Caco-2 (cell line): ENCODE measurements at regions of chr1 and their contacts with region 1.

Region 1: GRCh38 chr1:80882552-80882951 is 918.2 kb upstream of the ADGRL2 start:
- DNase-seq: peak; percentile 33 to 38
- H3K4me3 ChIP-seq: no peak overlapping the region
- H3K4me3 Mint-ChIP-seq: peak overlapping the region; percentile 40
- H3K27ac Mint-ChIP-seq: no peak overlapping the region
- H3K4me1 ChIP-seq: peaks cover 17% of the 10 kb centered on the region
- H3K4me1 Mint-ChIP-seq: peaks cover 5% of the 10 kb centered on the region
- H3K27me3 ChIP-seq: no peaks in the 10 kb centered on the region
- H3K27me3 Mint-ChIP-seq: no peaks in the 10 kb centered on the region
- CTCF ChIP-seq: no peak

Region 2: DNA sequence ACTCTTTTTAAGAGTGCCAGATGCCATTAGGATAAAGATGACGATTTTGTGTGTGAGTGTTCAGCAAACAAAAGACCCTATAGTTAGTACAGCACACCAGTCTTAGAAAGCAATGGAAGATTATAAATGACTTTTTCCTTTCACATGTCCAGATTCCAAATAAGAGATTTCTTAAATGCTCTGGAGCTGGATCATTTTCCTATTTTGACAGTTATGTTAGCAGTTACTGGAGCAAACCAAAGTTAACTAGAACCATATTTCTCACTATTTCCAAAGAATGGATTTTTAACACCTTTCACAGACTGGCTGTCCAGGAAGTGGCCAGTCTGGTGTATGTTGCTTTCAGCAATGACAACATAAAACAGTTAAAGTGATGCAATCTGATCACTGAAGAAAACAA is 12.4 kb after region 1 on chr1:
- CTCF ChIA-PET with region 1: no interaction called
- POLR2A ChIA-PET with region 1: no interaction called
- intact Hi-C with region 1: loop called (anchors 1 kb)
- DNase-seq: no peak
- H3K4me3 ChIP-seq: no peak overlapping the region
- H3K4me3 Mint-ChIP-seq: no peak overlapping the region
- H3K27ac Mint-ChIP-seq: no peak overlapping the region
- H3K4me1 ChIP-seq: no peaks in the 10 kb centered on the region
- H3K4me1 Mint-ChIP-seq: peaks cover 6% of the 10 kb centered on the region
- H3K27me3 ChIP-seq: no peaks in the 10 kb centered on the region
- H3K27me3 Mint-ChIP-seq: no peaks in the 10 kb centered on the region
- CTCF ChIP-seq: no peak

Region 3: DNA sequence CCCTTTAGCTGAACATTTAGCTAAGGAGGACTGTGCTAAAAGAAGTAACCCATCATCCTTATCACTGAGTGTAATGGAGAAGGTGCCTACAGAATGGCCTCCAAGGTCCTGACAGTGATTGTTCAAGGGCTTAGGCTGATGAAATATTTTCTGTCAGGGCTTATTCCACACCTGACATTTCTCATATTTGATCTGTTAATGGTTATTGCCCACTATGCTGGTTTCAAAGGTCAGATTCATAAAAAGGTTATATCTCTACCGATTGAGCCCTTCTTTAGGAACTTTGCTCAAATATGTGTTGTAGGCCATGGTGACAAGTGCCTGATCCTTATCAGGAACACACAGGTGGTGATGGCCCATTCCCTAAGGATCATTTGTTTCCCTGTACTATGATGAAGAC is 151.7 kb after region 1 on chr1:
- CTCF ChIA-PET with region 1: no interaction called
- POLR2A ChIA-PET with region 1: no interaction called
- intact Hi-C with region 1: loop called (anchors 2 kb)
- DNase-seq: peak; percentile 47 to 60
- H3K4me3 ChIP-seq: no peak overlapping the region
- H3K4me3 Mint-ChIP-seq: no peak overlapping the region
- H3K27ac Mint-ChIP-seq: no peak overlapping the region
- H3K4me1 ChIP-seq: no peaks in the 10 kb centered on the region; the same call in 1 of the 2 replicates
- H3K4me1 Mint-ChIP-seq: no peaks in the 10 kb centered on the region
- H3K27me3 ChIP-seq: no peaks in the 10 kb centered on the region
- H3K27me3 Mint-ChIP-seq: no peaks in the 10 kb centered on the region
- CTCF ChIP-seq: no peak